A673 (cell line): ENCODE measurements at regions of chr19 and their contacts with region 1.

Region 1: GRCh38 chr19:4815426-4816201 is 15.9 kb downstream of the TICAM1 start:
- DNase-seq: peak; percentile 97
- H3K4me3 ChIP-seq: no peak overlapping the region
- H3K27ac ChIP-seq: no peak overlapping the region
- H3K4me1 ChIP-seq: peaks cover 5% of the 10 kb centered on the region
- H3K27me3 ChIP-seq: no peaks in the 10 kb centered on the region
- CTCF ChIP-seq: no peak

Region 2: GRCh38 chr19:4759388-4760284 is 56.0 kb before region 1 on chr19:
- CTCF ChIA-PET with region 1: no interaction called
- POLR2A ChIA-PET with region 1: no interaction called
- intact Hi-C with region 1: no loop called
- DNase-seq: peak; percentile 92
- H3K4me3 ChIP-seq: peak overlapping the region; percentile 37
- H3K27ac ChIP-seq: no peak overlapping the region
- H3K4me1 ChIP-seq: peaks cover 7% of the 10 kb centered on the region
- H3K27me3 ChIP-seq: no peaks in the 10 kb centered on the region
- CTCF ChIP-seq: no peak

Region 3: GRCh38 chr19:4851551-4852290 is 36.1 kb after region 1 on chr19:
- CTCF ChIA-PET with region 1: interaction called, 43 read pairs
- POLR2A ChIA-PET with region 1: no interaction called
- intact Hi-C with region 1: no loop called
- DNase-seq: peak; percentile 75
- H3K4me3 ChIP-seq: no peak overlapping the region
- H3K27ac ChIP-seq: no peak overlapping the region
- H3K4me1 ChIP-seq: no peaks in the 10 kb centered on the region
- H3K27me3 ChIP-seq: no peaks in the 10 kb centered on the region
- CTCF ChIP-seq: peak; percentile 95

Region 4: DNA sequence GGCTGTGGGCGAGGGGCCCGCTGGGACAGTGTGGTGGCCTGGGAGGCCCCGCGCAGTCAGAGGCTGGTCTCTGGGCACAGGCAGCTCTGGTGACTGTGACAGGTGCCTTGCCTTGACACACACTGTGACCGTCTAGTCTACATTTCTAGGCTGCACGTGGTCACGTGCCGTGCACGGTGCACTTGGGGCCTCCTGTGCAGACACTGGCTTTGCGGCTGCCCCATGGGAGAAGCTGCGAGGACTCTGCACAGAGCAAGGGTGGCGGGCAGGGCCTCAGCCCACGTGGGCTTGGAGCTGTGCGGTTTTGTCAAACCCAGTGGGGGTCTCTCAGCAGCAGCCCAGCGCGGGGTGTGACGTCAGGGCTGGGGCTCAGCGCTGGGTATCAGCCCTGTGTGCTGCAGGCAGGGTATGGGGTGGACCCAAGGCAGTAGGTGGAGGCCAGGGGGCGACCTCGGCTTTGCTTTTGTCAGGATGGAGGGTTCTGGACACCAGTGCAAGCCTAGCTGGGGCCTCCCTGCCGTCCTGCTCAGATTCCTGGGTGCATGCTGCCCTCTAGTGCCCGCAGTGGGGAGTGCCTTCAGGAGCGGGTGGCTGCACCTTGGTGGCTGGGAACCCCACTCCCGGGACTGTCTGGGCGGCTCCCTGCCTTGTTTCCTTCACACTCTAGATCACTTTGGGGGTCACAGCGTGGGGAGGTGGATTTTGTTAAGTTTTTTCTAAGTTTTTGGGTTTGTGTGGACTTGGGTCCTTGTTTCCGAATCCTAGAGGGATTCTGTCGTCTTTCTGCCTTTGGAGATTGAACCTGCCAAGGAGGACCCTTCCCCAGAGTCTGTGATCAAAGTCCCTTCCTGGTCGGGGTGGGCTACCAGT is 215.9 kb after region 1 on chr19:
- CTCF ChIA-PET with region 1: interaction called, 6 read pairs
- POLR2A ChIA-PET with region 1: no interaction called
- intact Hi-C with region 1: loop called (anchors 1 kb)
- DNase-seq: peak; percentile 88
- H3K4me3 ChIP-seq: no peak overlapping the region
- H3K27ac ChIP-seq: peak overlapping the region; percentile 25
- H3K4me1 ChIP-seq: peaks cover 30% of the 10 kb centered on the region
- H3K27me3 ChIP-seq: no peaks in the 10 kb centered on the region
- CTCF ChIP-seq: peak; percentile 98